Activated T-helper 1 cell treated with anti-CD3 and anti-CD28 coated beads, Interleukin-12 subunit alpha, Interleukin-12 subunit beta, Interleukin-2, Interleukin-4 antibody, amounts not matched to agents 30 ng/mL and 10 ng/mL and 1 ng/mL, durations not matched to agents 14 hours and 24 hours and 36 hours (primary cell): ENCODE measurements at regions of chr10 and their contacts with region 1.

Region 1: DNA sequence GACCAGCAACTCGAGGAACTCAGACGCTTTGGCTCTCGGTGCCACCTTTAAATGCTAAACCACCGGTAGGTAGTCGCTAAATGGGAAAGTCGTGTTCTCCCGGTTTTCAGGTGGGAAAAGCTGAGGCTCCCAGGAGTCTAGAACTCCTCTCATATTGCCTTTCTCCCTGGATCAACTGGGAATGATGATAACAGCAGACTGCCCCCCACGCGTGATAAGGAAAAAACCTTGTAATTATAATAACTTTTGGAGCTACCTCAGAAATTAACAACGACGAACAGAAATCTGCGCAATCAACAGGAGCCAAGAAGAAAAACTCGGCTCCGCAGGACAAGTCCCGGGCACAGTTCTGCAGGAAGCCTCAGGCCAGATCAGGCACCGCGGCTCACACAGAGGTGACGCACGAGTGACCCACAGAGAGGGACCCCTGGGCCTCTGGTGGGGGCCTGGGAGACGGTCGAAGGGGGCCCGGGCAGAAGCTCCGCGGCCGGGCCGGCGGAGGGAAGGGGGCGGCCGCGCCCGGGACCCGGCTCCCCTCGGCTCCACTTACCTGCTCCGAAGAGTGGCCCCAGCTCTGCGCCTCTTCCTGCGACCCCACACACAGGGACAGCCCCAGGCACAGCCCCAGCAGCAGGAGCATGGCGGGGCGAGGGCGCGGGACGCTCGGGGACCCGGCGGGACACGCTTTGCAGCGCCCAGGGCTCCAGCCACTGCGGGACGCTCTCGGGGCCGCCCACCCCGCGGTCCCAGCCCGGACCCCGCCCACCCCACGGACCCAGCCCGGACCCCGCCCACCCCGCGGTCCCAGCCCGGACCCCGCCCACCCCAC is at the start of gene ITIH5:
- DNase-seq: no peak
- H3K4me3 Mint-ChIP-seq: peak within 1 kb of the TSS; percentile 57
- H3K27ac Mint-ChIP-seq: no peak within 1 kb of the TSS
- H3K4me1 Mint-ChIP-seq: peaks cover 12% of the 10 kb centered on the region
- H3K27me3 Mint-ChIP-seq: peaks cover 56% of the 10 kb centered on the region
- total RNA-seq, gene ITIH5: not detected in 2 replicates

Region 2: DNA sequence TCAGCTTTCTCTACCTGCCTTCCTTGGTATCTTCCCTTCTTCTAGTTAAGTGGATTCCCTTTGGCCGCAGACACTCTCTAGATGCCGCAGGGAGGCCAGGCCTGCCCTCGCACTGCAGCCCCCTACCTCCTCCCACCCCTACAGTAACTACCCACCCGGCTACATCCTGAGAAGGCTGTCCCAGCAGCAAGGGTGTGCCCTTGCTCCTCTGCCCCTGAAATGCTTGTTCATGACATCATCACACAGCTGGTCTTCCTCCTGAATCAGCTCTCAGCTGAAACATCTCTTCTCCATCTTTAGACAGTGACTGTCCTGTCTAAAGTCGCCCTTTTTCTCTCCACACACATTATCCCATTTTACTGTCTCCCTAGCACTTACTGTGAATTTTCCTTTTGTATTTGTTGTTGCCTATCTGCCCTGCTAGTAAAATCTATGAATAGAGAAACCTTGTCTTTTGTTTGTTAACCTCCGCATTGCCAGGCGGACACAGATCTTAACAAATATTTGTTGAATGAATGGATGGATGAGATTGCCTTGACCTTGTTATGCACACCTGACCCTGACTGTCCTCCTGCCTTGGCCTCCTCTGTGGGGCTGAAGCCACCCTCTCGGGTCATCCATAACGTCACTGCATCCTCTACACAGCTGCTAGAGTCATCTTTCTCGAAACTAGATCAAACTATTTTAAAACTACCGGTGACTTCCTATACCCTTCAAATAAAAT is 279.2 kb after region 1 on chr10:
- intact Hi-C with region 1: no loop called
- DNase-seq: no peak
- H3K4me3 Mint-ChIP-seq: no peak overlapping the region
- H3K27ac Mint-ChIP-seq: no peak overlapping the region
- H3K4me1 Mint-ChIP-seq: peaks cover 5% of the 10 kb centered on the region
- H3K27me3 Mint-ChIP-seq: no peaks in the 10 kb centered on the region

Region 3: DNA sequence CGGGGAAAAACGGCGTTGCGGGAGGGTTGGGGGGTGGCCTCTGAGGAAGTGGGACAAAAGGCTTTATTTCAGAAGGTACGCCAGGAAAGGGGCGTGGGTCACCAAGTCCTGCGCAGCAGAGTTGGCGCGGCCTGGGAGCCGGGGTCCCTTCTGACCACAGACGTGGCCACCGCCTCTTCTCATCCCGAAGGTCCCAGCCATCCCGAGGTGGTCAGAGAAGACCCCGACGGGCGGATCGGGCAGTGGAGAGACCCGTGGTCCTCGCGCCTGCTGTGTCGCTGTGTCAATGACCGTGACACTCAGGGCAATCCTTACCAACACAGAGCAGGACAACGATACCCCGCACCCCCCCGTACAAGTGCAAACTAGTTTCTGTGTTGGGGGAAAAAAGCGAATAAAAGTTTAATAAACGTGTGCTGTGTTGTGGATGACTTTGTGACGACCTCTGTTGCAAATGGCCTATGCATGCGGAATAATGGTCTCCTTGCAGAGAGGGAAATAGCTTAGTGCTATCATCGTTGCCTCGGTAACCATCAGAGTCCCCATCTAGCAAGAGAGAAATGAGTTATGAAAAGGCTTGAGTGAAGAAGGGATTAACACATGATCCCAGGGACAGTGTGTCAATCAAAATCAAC is 368.7 kb after region 1 on chr10:
- intact Hi-C with region 1: loop called (anchors 10 kb)
- DNase-seq: no peak
- H3K4me3 Mint-ChIP-seq: peak overlapping the region; percentile 10
- H3K27ac Mint-ChIP-seq: peak overlapping the region; percentile 76
- H3K4me1 Mint-ChIP-seq: peaks cover 20% of the 10 kb centered on the region
- H3K27me3 Mint-ChIP-seq: peaks cover 72% of the 10 kb centered on the region